Activated CD4-positive, alpha-beta T cell treated with anti-CD3 and anti-CD28 coated beads, Interleukin-2, amount 10 ng/mL, durations not matched to agents 24 days and 14 days (primary cell): ENCODE measurements at regions of chr2 and their contacts with region 1.

Region 1: GRCh38 chr2:71068218-71069035 is at the start of gene NAGK:
- DNase-seq: peak; percentile 99
- H3K4me3 Mint-ChIP-seq: peak within 1 kb of the TSS; percentile 92
- H3K27ac Mint-ChIP-seq: peak within 1 kb of the TSS; percentile 96
- H3K4me1 Mint-ChIP-seq: peaks cover 51% of the 10 kb centered on the region
- H3K27me3 Mint-ChIP-seq: no peaks in the 10 kb centered on the region
- total RNA-seq, gene NAGK: 55.9 and 67.1 TPM in 2 replicates

Region 2: DNA sequence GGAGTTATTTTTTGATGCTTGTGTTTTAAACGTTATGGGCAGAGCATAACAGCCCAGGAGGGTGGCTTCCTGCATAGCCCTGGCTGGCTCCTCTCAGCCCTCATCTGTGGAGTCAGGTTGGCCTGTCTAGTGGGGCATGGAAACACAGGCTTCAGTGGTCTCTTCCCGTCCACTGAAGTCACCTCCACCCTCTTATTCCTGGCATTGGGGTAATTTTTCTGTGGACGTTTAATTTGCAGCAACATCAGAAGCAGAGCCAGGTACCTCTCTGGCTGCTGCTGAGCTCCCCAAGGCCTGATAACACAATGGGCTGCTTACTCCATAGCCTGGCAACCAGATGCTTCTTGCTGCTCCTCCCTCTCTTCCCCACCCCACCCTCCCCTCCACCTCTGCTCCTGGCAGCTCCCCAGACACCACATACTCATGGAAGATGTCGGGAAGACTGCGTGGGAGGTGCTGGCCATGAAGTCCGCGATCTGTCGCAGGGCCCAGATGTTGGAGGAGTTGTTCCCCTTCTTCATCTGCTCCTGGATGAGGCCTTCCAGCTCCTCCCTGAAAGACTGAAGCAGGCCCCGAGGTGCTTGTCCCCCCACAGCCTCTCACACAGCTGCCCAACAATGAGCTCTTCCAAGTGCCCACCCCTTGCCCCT is 364.4 kb before region 1 on chr2:
- intact Hi-C with region 1: no loop called
- DNase-seq: no peak
- H3K4me3 Mint-ChIP-seq: no peak overlapping the region
- H3K27ac Mint-ChIP-seq: no peak overlapping the region
- H3K4me1 Mint-ChIP-seq: no peaks in the 10 kb centered on the region
- H3K27me3 Mint-ChIP-seq: peaks cover 2% of the 10 kb centered on the region

Region 3: DNA sequence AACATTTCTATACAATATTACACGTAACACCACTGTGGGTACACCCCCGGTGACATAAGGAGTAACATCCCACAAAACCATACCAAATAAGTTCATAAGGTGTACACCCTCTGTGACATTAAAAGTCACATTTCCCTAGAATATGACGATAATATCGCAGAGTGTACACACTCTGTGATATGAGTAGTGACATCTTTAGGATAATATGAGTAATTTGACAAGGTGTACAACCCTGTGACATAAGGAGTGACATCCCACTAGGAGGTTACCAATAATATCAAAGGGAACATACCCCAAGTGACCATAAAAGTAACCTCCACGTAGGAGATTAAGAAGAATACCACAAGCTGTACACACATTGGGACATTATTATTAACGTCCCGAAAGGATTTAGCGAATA is 49.8 kb before region 1 on chr2:
- intact Hi-C with region 1: no loop called
- DNase-seq: no peak
- H3K4me3 Mint-ChIP-seq: no peak overlapping the region
- H3K27ac Mint-ChIP-seq: no peak overlapping the region
- H3K4me1 Mint-ChIP-seq: peaks cover 7% of the 10 kb centered on the region
- H3K27me3 Mint-ChIP-seq: no peaks in the 10 kb centered on the region

Region 4: DNA sequence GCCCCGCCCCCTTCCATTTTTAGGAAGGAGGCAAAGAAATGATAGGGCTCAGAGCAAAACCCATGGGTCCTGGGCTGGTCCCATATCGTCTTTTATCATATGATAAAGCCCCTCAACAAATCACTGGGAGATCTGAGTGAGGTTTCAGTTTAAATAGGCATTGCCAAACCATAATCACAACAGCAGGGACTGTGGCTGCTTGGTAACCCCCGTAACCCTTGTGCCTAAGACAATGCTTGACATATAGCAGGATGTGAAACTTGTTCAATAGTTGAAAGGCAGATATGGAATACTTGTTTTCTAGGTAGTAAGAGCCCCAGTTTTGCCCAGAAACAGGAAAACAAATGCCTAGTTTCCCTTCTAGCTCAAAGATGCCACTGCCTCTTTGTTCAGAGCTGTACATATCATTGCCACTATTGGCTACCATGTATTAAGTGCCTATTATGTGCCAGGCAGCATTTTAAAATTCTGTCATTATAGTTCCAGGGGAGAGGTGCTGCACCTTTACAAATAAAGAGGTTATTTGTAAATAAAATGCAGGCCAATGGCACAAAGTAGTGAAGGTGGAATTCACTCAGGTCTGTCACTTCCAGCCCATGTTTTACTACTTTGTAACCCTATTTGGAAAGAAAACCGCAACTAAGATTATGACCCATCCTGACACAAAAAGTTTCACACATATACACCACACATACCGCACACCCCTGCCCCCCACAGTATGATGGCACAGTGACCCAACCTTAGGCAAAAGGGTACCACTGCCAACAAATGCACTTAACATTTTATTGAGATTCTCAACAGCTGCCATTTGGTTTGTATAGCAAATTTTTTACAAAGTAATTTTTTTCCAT is 14.2 kb after region 1 on chr2:
- intact Hi-C with region 1: loop called (anchors 2 kb)
- DNase-seq: no peak
- H3K4me3 Mint-ChIP-seq: no peak overlapping the region
- H3K27ac Mint-ChIP-seq: peak overlapping the region; percentile 45
- H3K4me1 Mint-ChIP-seq: peaks cover 6% of the 10 kb centered on the region
- H3K27me3 Mint-ChIP-seq: peaks cover 7% of the 10 kb centered on the region

Region 5: DNA sequence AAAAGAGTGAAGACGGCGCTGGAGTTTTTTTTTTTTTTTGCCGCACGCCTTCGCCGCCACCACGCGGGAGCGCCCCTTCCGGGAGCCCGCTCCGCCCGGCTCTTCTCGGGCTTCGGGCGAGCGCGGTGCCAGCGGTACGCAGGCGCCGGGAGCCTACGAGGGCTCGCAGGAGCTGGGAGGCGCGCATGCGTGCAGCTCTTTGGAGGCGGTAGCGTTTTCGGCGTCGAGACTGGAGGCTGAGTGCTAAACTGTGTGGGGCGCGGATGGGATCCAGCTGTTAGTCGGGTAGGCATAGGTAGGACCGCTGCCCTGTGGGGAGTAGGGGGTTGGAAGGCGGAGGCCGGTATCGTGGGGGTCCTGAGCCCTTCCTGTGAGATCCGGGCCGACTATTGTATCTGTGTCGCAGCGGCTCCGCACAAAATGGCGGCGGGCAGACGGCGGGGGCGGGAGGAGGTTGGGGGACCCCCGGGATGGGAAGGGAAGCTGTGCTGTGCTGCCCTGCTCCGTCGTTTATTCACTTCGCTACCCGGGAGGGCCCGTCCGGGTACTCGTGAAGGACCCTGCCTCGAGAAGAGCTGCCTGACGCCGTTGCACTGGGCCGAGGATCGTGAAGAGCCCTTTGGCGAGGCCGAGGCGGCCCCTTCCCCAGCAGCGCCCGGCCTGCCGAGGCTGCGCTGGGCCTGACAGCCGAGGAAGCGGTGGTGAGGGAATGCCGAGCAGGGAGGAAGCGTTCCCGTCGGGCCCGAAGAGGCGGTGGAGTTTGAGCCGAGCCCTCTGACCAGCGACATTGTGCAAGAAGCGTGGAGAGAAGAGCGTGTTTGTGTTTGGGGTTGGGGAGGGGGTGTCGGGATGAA is 263.4 kb after region 1 on chr2 and contains the start of gene ZNF638:
- intact Hi-C with region 1: loop called (anchors 1 kb)
- DNase-seq: peak; percentile 98
- H3K4me3 Mint-ChIP-seq: peak within 1 kb of the TSS; percentile 94
- H3K27ac Mint-ChIP-seq: peak within 1 kb of the TSS; percentile 100
- H3K4me1 Mint-ChIP-seq: peaks cover 20% of the 10 kb centered on the region
- H3K27me3 Mint-ChIP-seq: peaks cover 12% of the 10 kb centered on the region
- total RNA-seq, gene ZNF638: 90.2 and 91.5 TPM in 2 replicates